ENCODE measurements at regions of chr1 and their contacts with region 1.

Region 1: DNA sequence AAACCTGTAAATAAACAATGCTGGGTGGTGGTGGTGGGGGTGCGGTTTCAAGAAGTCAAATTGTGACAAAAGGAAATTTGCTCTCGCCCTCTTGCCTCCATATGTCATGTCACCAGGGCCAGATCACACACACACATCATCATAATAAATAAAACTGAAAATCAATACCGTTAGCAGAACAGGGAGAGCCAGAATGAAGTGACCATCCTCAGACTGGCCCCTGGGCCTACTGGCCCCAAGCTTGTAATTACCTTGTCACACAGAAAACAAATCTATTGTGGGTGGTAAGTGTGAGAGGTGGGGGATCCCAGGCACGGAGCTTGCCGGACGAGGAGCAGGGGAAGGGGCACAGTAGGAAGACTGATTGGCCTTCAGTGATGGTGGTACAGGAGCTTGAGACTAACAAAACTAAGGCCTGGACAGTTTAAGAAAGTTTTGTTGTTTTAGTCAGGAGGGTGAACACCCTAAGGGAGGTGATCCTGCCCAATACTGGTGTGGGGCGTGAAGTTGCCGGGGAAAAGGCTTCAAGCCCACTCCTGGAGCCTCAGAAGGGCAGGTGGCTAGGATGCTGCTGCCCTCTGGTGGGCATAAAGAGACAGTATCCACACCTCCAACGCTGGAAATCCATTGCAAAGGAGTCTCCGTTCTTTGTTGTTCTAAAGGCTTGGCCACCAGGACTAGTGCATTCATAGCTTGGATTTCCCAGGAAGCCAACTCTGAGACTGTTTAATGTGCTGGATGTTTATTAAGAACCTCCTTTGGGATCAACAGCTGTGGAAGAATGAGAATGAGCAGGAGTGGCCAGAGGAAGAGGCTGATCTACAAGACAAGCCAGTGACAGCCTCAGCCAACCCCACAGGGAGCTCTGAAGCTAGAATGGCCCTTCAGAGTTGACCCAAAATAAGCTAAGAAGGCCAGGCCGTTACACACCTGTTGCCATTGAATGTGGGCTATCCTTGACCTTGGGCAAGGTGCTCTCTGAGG is 8.1 kb upstream of the C1orf216 start:
- DNase-seq: peak; percentile 72
- ATAC-seq: peak; percentile 76
- H3K4me3 ChIP-seq: no peak overlapping the region
- H3K4me3 Mint-ChIP-seq: no peak overlapping the region
- H3K27ac ChIP-seq: no peak overlapping the region
- H3K27ac Mint-ChIP-seq: peak overlapping the region; percentile 26
- H3K4me1 ChIP-seq: peaks cover 0 to 6% of the 10 kb centered on the region in 2 donors
- H3K4me1 Mint-ChIP-seq: peaks cover 4% of the 10 kb centered on the region
- H3K27me3 ChIP-seq: no peaks in the 10 kb centered on the region
- H3K27me3 Mint-ChIP-seq: no peaks in the 10 kb centered on the region
- CTCF ChIP-seq: peak; percentile 87

Region 2: DNA sequence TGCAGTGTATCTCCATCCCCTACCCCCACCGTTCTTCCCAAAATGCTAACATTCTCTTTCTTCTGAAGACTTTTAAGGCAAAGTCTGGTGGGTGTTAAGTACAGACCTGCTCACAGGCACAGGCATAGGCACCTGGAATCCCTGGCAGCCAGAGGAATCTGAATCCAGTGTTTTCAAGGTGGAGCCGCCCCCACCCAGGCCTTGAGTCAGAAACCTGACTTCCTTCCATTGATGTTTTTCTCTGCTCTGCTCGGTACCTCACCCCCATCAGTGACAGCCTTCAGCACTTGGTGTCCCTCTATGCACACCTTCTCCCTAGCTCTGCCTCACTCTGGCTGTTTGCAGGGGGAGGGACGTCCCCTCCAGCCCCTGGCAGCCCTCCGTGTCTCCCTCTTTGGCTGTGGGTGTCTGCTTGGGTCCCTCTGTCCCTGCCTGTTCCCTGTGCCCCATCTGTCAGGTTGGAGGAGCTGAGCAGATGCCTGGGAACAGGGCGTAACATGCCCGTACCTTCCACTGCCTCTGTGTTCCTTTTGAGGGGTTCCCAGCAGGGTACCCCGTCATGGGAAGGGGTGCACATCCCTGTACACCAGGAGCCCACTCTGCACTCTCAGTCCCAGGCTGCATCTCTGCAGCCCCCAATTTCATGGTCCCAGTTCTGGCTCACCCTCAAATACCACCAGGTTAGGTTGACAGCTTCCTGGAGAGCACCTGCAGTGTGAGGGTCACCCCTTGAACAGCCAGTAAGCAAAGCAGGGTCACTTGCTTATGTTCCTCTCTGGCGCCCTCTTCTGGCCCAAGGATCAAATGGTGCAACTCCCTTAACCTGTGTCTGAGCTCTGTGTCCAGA is 162.5 kb before region 1 on chr1:
- CTCF ChIA-PET with region 1: interaction called, 126 read pairs
- POLR2A ChIA-PET with region 1: no interaction called
- intact Hi-C with region 1: loop called (anchors 1 kb)
- DNase-seq: peak; percentile 82
- ATAC-seq: peak; percentile 71
- H3K4me3 ChIP-seq: no peak overlapping the region
- H3K4me3 Mint-ChIP-seq: no peak overlapping the region
- H3K27ac ChIP-seq: no peak overlapping the region
- H3K27ac Mint-ChIP-seq: no peak overlapping the region
- H3K4me1 ChIP-seq: no peaks in the 10 kb centered on the region
- H3K4me1 Mint-ChIP-seq: peaks cover 17% of the 10 kb centered on the region
- H3K27me3 ChIP-seq: no peaks in the 10 kb centered on the region
- H3K27me3 Mint-ChIP-seq: no peaks in the 10 kb centered on the region
- CTCF ChIP-seq: peak; percentile 85

Region 3: GRCh38 chr1:35715568-35716002 is 11.2 kb before region 1 on chr1:
- CTCF ChIA-PET with region 1: interaction called, 143 read pairs
- POLR2A ChIA-PET with region 1: no interaction called
- intact Hi-C with region 1: no loop called
- DNase-seq: peak; percentile 79
- ATAC-seq: peak; percentile 59
- H3K4me3 ChIP-seq: no peak overlapping the region
- H3K4me3 Mint-ChIP-seq: peak overlapping the region; percentile 51
- H3K27ac ChIP-seq: no peak overlapping the region
- H3K27ac Mint-ChIP-seq: peak overlapping the region; percentile 54
- H3K4me1 ChIP-seq: peaks cover 10 to 20% of the 10 kb centered on the region in 2 donors
- H3K4me1 Mint-ChIP-seq: peaks cover 29% of the 10 kb centered on the region
- H3K27me3 ChIP-seq: peaks cover 0 to 3% (median 0%) of the 10 kb centered on the region in 4 experiments
- H3K27me3 Mint-ChIP-seq: no peaks in the 10 kb centered on the region
- CTCF ChIP-seq: peak; percentile 98

Region 4: DNA sequence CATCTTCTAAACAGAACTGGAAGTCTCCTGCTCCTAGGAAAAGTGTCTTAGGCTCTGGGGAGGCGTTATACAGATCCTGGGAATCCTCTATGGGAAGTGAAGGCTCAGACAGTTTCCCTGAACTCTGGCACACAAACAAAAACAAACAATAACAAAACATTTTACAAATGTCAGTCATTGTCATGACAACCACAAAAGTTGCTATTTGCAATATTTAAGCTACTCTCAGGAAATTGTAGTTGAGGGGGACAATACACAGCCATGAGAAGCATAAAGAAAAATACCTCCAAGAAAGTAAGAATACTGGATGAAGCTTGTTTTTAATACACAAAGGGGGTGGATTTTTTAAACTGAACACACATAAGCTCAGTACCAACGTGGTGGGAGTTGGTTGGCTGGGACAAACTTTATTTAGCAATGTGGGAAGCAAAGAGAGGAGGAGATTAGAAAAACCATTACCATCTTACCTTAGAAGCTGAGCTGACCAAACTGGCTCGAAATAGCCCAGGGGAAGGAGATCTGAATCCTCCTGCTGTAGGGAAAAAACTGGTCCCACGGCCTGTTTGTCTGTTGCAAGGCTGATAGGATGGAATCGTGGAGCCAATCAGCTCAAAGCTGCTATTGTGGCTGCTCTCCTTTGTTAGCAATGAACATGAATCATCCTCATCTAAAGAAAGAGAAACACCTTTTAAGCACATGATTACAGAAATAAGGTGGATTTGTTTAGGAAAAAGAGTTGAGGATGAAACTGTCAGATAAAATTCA is 21.4 kb after region 1 on chr1:
- CTCF ChIA-PET with region 1: interaction called, 12 read pairs
- POLR2A ChIA-PET with region 1: no interaction called
- intact Hi-C with region 1: no loop called
- DNase-seq: no peak
- ATAC-seq: no peak
- H3K4me3 ChIP-seq: no peak overlapping the region
- H3K4me3 Mint-ChIP-seq: no peak overlapping the region
- H3K27ac ChIP-seq: no peak overlapping the region
- H3K27ac Mint-ChIP-seq: no peak overlapping the region
- H3K4me1 ChIP-seq: no peaks in the 10 kb centered on the region
- H3K4me1 Mint-ChIP-seq: no peaks in the 10 kb centered on the region
- H3K27me3 ChIP-seq: no peaks in the 10 kb centered on the region
- H3K27me3 Mint-ChIP-seq: no peaks in the 10 kb centered on the region
- CTCF ChIP-seq: no peak

Region 5: DNA sequence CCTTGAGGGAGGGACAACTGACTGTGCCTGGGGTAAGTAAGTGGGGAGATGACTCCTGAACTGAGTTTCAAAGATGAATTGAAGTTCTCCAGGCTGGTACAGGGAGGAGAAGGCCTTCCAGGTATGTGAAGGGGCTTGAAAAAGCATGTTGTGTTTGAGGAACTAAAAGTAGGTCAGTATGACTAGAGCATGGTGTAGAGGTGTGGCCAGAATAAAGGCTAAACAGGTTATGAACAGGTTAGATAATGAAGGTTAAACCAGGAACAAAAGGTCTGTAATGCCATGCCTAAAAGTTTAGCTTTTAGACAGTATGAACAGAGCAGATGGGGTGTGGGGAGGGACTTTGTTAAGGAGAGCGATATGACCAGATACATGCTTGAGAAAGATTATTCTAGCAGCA is 50.4 kb after region 1 on chr1:
- CTCF ChIA-PET with region 1: interaction called, 46 read pairs
- POLR2A ChIA-PET with region 1: no interaction called
- intact Hi-C with region 1: loop called (anchors 1 kb)
- DNase-seq: no peak
- ATAC-seq: no peak
- H3K4me3 ChIP-seq: no peak overlapping the region
- H3K4me3 Mint-ChIP-seq: no peak overlapping the region
- H3K27ac ChIP-seq: no peak overlapping the region
- H3K27ac Mint-ChIP-seq: no peak overlapping the region
- H3K4me1 ChIP-seq: peaks cover 0 to 3% of the 10 kb centered on the region in 2 donors
- H3K4me1 Mint-ChIP-seq: peaks cover 5% of the 10 kb centered on the region
- H3K27me3 ChIP-seq: no peaks in the 10 kb centered on the region
- H3K27me3 Mint-ChIP-seq: no peaks in the 10 kb centered on the region
- CTCF ChIP-seq: no peak

Measured in B cell (primary cell).